ENCODE measurements at regions of chrX and their contacts with region 1.

Region 1: DNA sequence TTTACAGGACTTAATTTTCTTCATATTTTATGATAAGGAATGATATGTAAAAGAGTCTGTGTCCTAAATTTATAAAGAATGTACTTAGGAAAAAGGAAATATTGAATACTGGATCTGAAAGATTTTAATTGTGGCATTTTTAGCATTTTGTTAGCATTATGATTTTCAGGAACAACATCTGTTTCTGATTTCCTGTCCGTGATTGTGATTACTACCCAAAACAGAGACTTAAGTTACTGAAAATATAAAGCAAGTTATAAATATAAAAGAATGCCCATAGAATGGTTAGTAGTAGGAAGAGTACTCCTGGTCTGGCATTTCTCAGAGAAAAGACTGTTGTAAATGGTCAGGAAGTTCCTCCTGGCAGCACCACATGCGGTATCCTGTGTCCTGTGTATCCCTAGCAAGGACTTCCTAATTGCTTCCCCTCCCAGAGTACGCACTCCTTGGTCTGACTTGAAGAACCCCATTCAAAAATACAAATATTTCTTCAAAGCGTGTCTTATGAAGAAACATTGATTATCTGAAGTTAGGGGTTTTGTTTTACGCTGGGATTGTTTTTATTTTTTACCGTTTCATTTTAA is 88.9 kb downstream of the RS1 start:
- DNase-seq: peak; percentile 93
- H3K4me3 ChIP-seq: peak overlapping the region; percentile 3
- H3K27ac ChIP-seq: peak overlapping the region; percentile 77
- H3K4me1 ChIP-seq: peaks cover 39% of the 10 kb centered on the region
- H3K27me3 ChIP-seq: no peaks in the 10 kb centered on the region
- CTCF ChIP-seq: no peak

Region 2: GRCh38 chrX:18425199-18426003 is 157.6 kb before region 1 on chrX and contains the start of gene CDKL5:
- CTCF ChIA-PET with region 1: no interaction called
- POLR2A ChIA-PET with region 1: no interaction called
- intact Hi-C with region 1: loop called (anchors 10 kb)
- DNase-seq: peak; percentile 97
- H3K4me3 ChIP-seq: peak within 1 kb of the TSS; percentile 77
- H3K27ac ChIP-seq: no peak within 1 kb of the TSS
- H3K4me1 ChIP-seq: peaks cover 6% of the 10 kb centered on the region
- H3K27me3 ChIP-seq: peaks cover 20% of the 10 kb centered on the region
- CTCF ChIP-seq: no peak
- total RNA-seq, gene CDKL5: 7.5 and 9.2 TPM in 2 replicates